CD4-positive, alpha-beta T cell (primary cell): ENCODE measurements at regions of chr22 and their contacts with region 1.

Region 1: GRCh38 chr22:45268958-45269844 is 15.5 kb upstream of the UPK3A start:
- DNase-seq: peak; percentile 81 to 97 (median 92)
- ATAC-seq: peak; percentile 99
- H3K4me3 ChIP-seq: peak overlapping the region; percentile 59
- H3K4me3 Mint-ChIP-seq: peak overlapping the region; percentile 83
- H3K27ac ChIP-seq: no peak overlapping the region
- H3K27ac Mint-ChIP-seq: no peak overlapping the region
- H3K4me1 ChIP-seq: peaks cover 18% of the 10 kb centered on the region
- H3K4me1 Mint-ChIP-seq: peaks cover 17% of the 10 kb centered on the region
- H3K27me3 ChIP-seq: peaks cover 0 to 7% of the 10 kb centered on the region in 2 experiments
- H3K27me3 Mint-ChIP-seq: peaks cover 14% of the 10 kb centered on the region
- CTCF ChIP-seq: peak; percentile 83

Region 2: DNA sequence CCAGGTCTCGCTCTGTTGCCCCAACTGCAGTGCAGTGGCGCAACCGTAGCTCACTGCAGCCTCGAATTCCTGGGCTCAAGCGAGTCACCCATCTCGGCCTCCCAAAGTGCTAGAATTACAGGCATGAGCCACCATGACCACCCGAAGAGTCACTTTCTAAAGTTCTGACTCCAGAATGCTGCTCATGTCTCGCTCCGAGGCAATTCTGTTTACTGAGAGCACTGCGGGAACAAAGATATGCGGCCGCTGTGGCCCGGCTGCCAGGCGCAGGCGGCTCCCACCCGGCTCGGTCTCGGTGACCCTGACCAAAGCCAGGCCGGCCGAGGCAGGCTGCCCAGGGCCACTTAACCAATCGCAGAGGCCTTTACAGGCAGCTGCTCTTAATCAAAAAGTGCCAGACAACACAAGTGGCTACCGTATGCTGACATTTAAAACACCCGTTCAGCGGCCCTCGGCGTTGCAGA is 338.1 kb before region 1 on chr22:
- CTCF ChIA-PET with region 1: no interaction called
- POLR2A ChIA-PET with region 1: no interaction called
- intact Hi-C with region 1: no loop called
- DNase-seq: no peak
- ATAC-seq: no peak
- H3K4me3 ChIP-seq: no peak overlapping the region
- H3K4me3 Mint-ChIP-seq: no peak overlapping the region
- H3K27ac ChIP-seq: no peak overlapping the region
- H3K27ac Mint-ChIP-seq: no peak overlapping the region
- H3K4me1 ChIP-seq: no peaks in the 10 kb centered on the region
- H3K4me1 Mint-ChIP-seq: no peaks in the 10 kb centered on the region
- H3K27me3 ChIP-seq: no peaks in the 10 kb centered on the region
- H3K27me3 Mint-ChIP-seq: no peaks in the 10 kb centered on the region
- CTCF ChIP-seq: no peak

Region 3: GRCh38 chr22:45212306-45212709 is 56.9 kb before region 1 on chr22:
- CTCF ChIA-PET with region 1: no interaction called
- POLR2A ChIA-PET with region 1: no interaction called
- intact Hi-C with region 1: no loop called
- DNase-seq: no peak
- ATAC-seq: no peak
- H3K4me3 ChIP-seq: no peak overlapping the region
- H3K4me3 Mint-ChIP-seq: no peak overlapping the region
- H3K27ac ChIP-seq: no peak overlapping the region
- H3K27ac Mint-ChIP-seq: no peak overlapping the region
- H3K4me1 ChIP-seq: no peaks in the 10 kb centered on the region
- H3K4me1 Mint-ChIP-seq: no peaks in the 10 kb centered on the region
- H3K27me3 ChIP-seq: no peaks in the 10 kb centered on the region
- H3K27me3 Mint-ChIP-seq: no peaks in the 10 kb centered on the region
- CTCF ChIP-seq: no peak

Region 4: DNA sequence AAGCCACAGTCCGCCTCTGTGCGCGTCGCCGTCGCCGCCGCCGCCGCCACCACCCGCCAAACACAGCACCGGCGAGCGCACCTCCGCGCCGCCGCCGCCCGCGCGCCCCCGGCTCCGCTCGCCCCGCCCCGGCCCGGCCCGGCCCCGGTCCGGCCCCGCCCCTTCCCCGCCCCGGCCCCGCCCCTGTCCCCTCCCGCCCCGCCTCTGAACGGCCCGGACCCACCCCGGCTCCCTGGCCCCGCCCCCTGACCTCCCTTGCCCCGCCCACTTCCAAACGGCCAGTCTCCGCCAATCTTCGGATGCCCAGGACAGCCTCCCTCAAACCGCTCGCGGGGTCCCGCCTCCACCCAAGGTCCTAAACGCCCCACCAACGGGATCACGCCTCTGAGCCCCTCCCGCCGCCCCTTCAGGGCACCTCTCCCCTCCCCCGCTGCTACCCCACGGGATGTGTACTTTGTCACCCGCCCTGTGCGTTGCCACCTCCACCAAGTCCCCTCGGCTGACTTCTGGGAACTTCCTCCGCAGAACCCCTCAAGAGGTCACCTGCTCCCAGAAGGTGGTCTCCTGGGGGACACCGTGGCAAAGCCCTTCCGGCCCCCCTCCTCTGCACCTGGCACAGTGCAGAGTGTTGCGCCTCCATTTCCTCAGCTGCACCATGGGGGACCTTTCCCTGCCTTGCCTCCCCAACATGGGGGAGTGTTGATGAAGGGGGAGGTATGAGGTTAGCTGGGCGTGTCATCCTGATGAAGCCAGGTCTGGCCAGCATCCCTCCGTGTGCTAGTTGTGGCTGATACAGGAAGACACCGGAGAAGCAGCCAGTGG is 28.2 kb before region 1 on chr22 and contains the start of gene KIAA0930:
- CTCF ChIA-PET with region 1: no interaction called
- POLR2A ChIA-PET with region 1: no interaction called
- intact Hi-C with region 1: loop called in 1 of 2 experiments (anchors 1 kb)
- DNase-seq: peak; percentile 70 to 89 (median 76)
- ATAC-seq: peak; percentile 62
- H3K4me3 ChIP-seq: peak within 1 kb of the TSS; percentile 72
- H3K4me3 Mint-ChIP-seq: peak within 1 kb of the TSS; percentile 94
- H3K27ac ChIP-seq: peak within 1 kb of the TSS; percentile 32 to 52
- H3K27ac Mint-ChIP-seq: peak within 1 kb of the TSS; percentile 90
- H3K4me1 ChIP-seq: peaks cover 39% of the 10 kb centered on the region
- H3K4me1 Mint-ChIP-seq: peaks cover 19% of the 10 kb centered on the region
- H3K27me3 ChIP-seq: no peaks in the 10 kb centered on the region
- H3K27me3 Mint-ChIP-seq: no peaks in the 10 kb centered on the region
- CTCF ChIP-seq: no peak
- total RNA-seq, gene KIAA0930: 6.7 to 7.4 TPM

Region 5: DNA sequence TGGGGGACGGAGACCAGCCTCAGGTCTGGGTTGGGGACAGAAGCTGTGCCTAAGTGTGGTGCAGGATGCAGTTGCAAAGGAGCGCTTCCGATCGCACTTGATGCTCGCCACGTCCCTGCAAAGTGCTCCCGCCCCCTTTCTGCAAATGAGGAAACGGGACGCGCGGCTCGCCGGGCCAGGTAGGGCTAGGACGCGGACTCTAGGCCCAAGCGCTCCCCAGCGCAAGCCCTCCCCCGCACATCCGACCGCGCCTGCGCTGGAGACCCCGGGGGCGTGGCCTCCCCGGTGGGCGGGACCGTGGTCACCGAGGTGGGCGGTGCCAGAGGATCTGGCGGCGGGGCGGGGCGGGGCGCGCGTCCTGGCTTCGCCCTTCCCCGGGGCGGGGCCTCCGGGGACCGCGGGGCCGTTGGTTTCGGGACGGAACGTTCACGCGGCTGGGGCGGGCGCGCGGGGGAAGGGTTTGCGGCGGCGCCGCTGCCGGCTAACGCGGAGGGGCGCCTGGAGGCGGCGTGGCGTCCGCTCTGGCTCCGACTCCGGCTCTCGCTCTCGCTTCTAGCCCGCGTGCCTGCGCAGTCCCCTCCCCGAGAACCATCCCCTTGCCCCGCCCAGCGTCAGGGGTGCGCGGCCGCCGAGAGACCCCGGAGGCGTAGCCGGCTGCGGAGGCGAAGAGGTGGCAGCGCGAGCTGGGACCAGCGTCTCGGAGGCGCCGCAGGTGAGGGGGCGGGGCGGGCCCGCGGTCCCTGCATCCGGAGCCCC is 40.4 kb after region 1 on chr22 and contains the start of gene FAM118A:
- CTCF ChIA-PET with region 1: interaction called, 3 read pairs
- POLR2A ChIA-PET with region 1: interaction called, 3 read pairs
- intact Hi-C with region 1: loop called in 1 of 2 experiments (anchors 1 kb)
- DNase-seq: peak; percentile 91 to 99 (median 96)
- ATAC-seq: peak; percentile 84
- H3K4me3 ChIP-seq: peak within 1 kb of the TSS; percentile 93
- H3K4me3 Mint-ChIP-seq: peak within 1 kb of the TSS; percentile 85
- H3K27ac ChIP-seq: peak within 1 kb of the TSS; percentile 77 to 87
- H3K27ac Mint-ChIP-seq: peak within 1 kb of the TSS; percentile 95
- H3K4me1 ChIP-seq: peaks cover 55% of the 10 kb centered on the region
- H3K4me1 Mint-ChIP-seq: peaks cover 49% of the 10 kb centered on the region
- H3K27me3 ChIP-seq: no peaks in the 10 kb centered on the region
- H3K27me3 Mint-ChIP-seq: no peaks in the 10 kb centered on the region
- CTCF ChIP-seq: no peak
- total RNA-seq, gene FAM118A: 159 to 161 TPM

Region 6: GRCh38 chr22:45318168-45318557 is 49.0 kb after region 1 on chr22:
- CTCF ChIA-PET with region 1: interaction called, 3 read pairs
- POLR2A ChIA-PET with region 1: no interaction called
- intact Hi-C with region 1: loop called in 1 of 2 experiments (anchors 2 kb)
- DNase-seq: peak; percentile 82 to 97 (median 87)
- ATAC-seq: peak; percentile 70
- H3K4me3 ChIP-seq: peak overlapping the region; percentile 50
- H3K4me3 Mint-ChIP-seq: peak overlapping the region; percentile 84
- H3K27ac ChIP-seq: peak overlapping the region; percentile 98 to 99
- H3K27ac Mint-ChIP-seq: peak overlapping the region; percentile 95
- H3K4me1 ChIP-seq: peaks cover 87% of the 10 kb centered on the region
- H3K4me1 Mint-ChIP-seq: peaks cover 95% of the 10 kb centered on the region
- H3K27me3 ChIP-seq: no peaks in the 10 kb centered on the region
- H3K27me3 Mint-ChIP-seq: no peaks in the 10 kb centered on the region
- CTCF ChIP-seq: no peak

Region 7: GRCh38 chr22:45435544-45436139 is 166.4 kb after region 1 on chr22:
- CTCF ChIA-PET with region 1: interaction called, 4 read pairs
- POLR2A ChIA-PET with region 1: no interaction called
- intact Hi-C with region 1: loop called (anchors 1 kb)
- DNase-seq: peak; percentile 72 to 91 (median 78)
- ATAC-seq: peak; percentile 97
- H3K4me3 ChIP-seq: no peak overlapping the region
- H3K4me3 Mint-ChIP-seq: no peak overlapping the region
- H3K27ac ChIP-seq: no peak overlapping the region
- H3K27ac Mint-ChIP-seq: no peak overlapping the region
- H3K4me1 ChIP-seq: peaks cover 12% of the 10 kb centered on the region
- H3K4me1 Mint-ChIP-seq: peaks cover 17% of the 10 kb centered on the region
- H3K27me3 ChIP-seq: no peaks in the 10 kb centered on the region
- H3K27me3 Mint-ChIP-seq: no peaks in the 10 kb centered on the region
- CTCF ChIP-seq: peak; percentile 96

Region 8: DNA sequence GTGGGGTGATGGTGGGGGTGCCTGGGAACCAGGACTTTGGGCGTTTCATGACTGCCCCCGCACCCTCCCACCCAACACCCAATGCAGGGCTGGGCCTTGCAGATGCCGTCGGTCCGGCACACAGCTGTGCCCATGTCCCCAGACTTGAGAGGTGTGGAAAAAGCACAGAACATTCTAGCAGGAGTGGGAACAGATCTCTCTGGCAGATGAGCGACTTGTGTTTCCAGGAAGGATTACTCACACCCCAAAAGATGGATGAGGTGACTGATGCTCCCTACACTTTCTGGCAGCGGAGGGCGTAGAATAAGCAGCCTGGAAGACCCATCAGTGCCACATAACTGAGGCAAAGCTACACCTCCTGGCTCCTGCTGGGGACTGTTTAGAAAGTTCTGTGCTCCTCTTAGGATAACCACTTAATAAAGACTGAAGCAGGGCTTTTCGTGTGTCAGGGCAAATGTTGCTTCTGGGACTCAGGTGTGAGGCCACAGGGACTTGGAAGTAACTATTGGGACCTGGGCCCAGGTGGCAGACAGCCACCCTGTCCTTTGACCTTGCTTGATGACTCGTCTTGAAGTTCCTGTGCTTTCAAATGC is 257.7 kb after region 1 on chr22:
- CTCF ChIA-PET with region 1: no interaction called
- POLR2A ChIA-PET with region 1: no interaction called
- intact Hi-C with region 1: no loop called
- DNase-seq: no peak
- ATAC-seq: no peak
- H3K4me3 ChIP-seq: no peak overlapping the region
- H3K4me3 Mint-ChIP-seq: no peak overlapping the region
- H3K27ac ChIP-seq: no peak overlapping the region
- H3K27ac Mint-ChIP-seq: no peak overlapping the region
- H3K4me1 ChIP-seq: no peaks in the 10 kb centered on the region
- H3K4me1 Mint-ChIP-seq: no peaks in the 10 kb centered on the region
- H3K27me3 ChIP-seq: no peaks in the 10 kb centered on the region
- H3K27me3 Mint-ChIP-seq: peaks cover 1% of the 10 kb centered on the region
- CTCF ChIP-seq: no peak

Region 9: DNA sequence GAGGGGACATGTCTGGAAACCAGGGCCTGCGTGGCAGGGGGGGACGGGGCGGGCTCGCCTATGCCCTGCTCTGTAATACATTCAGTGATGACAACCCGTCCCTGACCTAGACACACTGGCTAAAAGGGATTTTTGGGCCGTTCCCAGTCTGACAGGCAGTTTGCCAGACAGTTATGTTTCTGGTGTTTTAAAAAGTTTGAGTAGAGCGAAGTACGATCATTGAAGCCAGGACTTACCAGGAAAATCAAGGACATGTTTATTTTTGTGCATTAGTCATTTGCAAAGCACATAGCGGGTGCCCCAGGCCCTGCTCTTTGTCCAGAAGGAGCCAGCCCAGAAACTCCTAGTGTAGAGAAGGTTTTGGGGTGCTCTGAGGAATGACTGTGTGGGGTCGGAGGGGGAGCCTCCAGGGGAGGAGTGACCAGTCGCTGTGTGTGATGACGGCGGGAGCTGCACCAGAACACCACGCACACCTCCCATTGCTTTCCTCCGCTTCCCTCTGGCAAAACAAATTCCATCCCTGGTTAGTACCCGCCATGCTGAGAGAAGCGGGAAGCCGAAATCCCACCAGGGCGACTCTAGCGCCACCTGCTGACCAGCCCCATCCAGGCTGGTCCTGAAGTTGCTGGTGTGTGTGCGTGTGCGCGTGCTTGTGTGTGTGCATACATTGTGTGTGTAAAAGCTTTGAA is 284.3 kb after region 1 on chr22:
- CTCF ChIA-PET with region 1: no interaction called
- POLR2A ChIA-PET with region 1: no interaction called
- intact Hi-C with region 1: loop called in 1 of 2 experiments (anchors 5 kb)
- DNase-seq: peak in 11 of 14 experiments; percentile 22 to 65 (median 32)
- ATAC-seq: no peak
- H3K4me3 ChIP-seq: no peak overlapping the region
- H3K4me3 Mint-ChIP-seq: no peak overlapping the region
- H3K27ac ChIP-seq: no peak overlapping the region
- H3K27ac Mint-ChIP-seq: no peak overlapping the region
- H3K4me1 ChIP-seq: no peaks in the 10 kb centered on the region
- H3K4me1 Mint-ChIP-seq: no peaks in the 10 kb centered on the region
- H3K27me3 ChIP-seq: peaks cover 0 to 2% of the 10 kb centered on the region in 2 experiments
- H3K27me3 Mint-ChIP-seq: peaks cover 12% of the 10 kb centered on the region
- CTCF ChIP-seq: peak; percentile 28

Region 10: GRCh38 chr22:45671768-45672563 is 402.8 kb after region 1 on chr22 and contains the start of gene ATXN10:
- CTCF ChIA-PET with region 1: no interaction called
- POLR2A ChIA-PET with region 1: no interaction called
- intact Hi-C with region 1: loop called in 1 of 2 experiments (anchors 5 kb)
- DNase-seq: peak; percentile 33 to 87 (median 62)
- ATAC-seq: peak; percentile 77
- H3K4me3 ChIP-seq: peak within 1 kb of the TSS; percentile 82
- H3K4me3 Mint-ChIP-seq: peak within 1 kb of the TSS; percentile 92
- H3K27ac ChIP-seq: peak within 1 kb of the TSS in 1 of 2 donors; percentile 35
- H3K27ac Mint-ChIP-seq: peak within 1 kb of the TSS; percentile 91
- H3K4me1 ChIP-seq: peaks cover 22% of the 10 kb centered on the region
- H3K4me1 Mint-ChIP-seq: peaks cover 37% of the 10 kb centered on the region
- H3K27me3 ChIP-seq: no peaks in the 10 kb centered on the region
- H3K27me3 Mint-ChIP-seq: peaks cover 7% of the 10 kb centered on the region
- CTCF ChIP-seq: no peak
- total RNA-seq, gene ATXN10: 43.8 to 48.0 TPM